ENCODE measurements at regions of chr2 and their contacts with region 1.

Region 1: GRCh38 chr2:112601751-112602150 is 17.3 kb downstream of the CHCHD5 start:
- DNase-seq: peak in 1 of 2 donors; percentile 55
- H3K4me3 ChIP-seq: no peak overlapping the region
- H3K27ac ChIP-seq: no peak overlapping the region
- H3K4me1 ChIP-seq: no peaks in the 10 kb centered on the region
- H3K27me3 ChIP-seq: no peaks in the 10 kb centered on the region
- CTCF ChIP-seq: no peak

Region 2: DNA sequence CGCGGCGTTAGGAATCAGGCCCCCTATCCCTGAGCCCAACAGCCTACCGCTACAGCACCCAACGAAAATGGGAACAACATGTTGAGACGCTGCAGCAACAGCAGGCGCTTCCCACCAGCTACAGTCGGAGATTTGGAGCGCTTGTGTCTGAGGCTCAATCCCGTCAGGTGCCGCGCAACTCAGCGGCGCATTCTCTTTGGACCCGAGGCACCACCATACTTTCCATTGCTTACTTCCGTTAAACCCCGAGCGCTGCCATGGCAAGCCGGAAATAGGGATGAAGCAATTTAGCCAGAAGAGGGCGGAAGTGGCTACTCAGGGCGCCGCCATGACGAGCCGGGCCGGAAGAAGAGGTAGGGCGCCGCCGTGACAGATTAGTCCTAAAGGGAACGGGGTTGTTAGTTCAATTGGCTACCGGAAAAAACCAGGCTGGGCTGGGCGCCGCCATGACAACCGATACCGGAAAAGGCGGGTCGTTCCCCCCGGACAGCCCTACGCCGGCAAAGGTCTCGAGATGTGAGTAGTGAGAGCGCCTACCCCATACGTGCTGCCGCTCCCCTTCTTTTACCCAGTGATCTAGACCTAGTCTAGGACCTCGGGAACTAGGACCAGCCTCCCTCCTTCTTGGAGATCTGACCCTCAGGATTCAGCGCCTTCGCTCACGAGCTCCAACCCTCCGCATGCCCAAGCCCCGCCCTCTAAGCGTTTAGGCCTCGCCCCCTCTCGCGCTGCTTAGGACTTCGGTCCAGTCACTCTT is 17.4 kb before region 1 on chr2 and contains the start of gene CHCHD5:
- intact Hi-C with region 1: no loop called
- DNase-seq: peak; percentile 85 to 98
- H3K4me3 ChIP-seq: peak within 1 kb of the TSS; percentile 69 to 78
- H3K27ac ChIP-seq: peak within 1 kb of the TSS; percentile 92 to 95
- H3K4me1 ChIP-seq: peaks cover 4 to 13% of the 10 kb centered on the region in 2 donors
- H3K27me3 ChIP-seq: no peaks in the 10 kb centered on the region
- CTCF ChIP-seq: peak in 1 of 3 experiments; percentile 28
- total RNA-seq, gene CHCHD5: 26.5 TPM

Region 3: GRCh38 chr2:112626604-112627059 is 24.9 kb after region 1 on chr2:
- intact Hi-C with region 1: loop called (anchors 1 kb)
- DNase-seq: peak in 1 of 2 donors; percentile 78
- H3K4me3 ChIP-seq: peak overlapping the region; percentile 5 to 37
- H3K27ac ChIP-seq: peak overlapping the region; percentile 86 to 88
- H3K4me1 ChIP-seq: peaks cover 0 to 15% of the 10 kb centered on the region in 2 donors
- H3K27me3 ChIP-seq: no peaks in the 10 kb centered on the region
- CTCF ChIP-seq: peak; percentile 68 to 85 (median 72)

Region 4: DNA sequence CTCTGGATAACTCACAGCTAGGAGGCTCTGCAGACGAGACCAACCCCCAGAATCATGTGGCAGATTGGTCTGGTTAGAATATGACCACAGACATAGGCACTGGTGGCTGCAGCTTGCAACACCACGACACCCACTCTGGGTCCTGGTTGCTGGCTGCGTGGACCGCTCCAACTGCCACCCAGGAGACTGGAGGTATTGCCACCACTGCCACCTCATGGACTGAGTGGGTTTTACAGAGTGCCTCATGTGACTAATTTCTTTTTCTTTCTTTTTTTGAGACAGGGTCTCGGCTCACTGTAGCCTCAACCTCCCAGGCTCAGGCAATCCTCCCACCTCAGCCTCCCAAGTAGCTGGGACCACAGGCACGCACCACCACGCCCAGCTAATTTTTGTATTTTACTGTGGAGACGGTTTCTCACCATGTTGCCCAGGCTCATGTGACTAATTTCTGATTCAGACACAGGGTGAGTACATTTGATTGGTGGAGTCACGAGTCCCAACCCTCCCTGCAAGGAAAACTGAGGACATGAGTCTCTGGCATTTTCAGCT is 89.2 kb after region 1 on chr2:
- intact Hi-C with region 1: loop called (anchors 2 kb)
- DNase-seq: peak; percentile 21 to 78
- H3K4me3 ChIP-seq: peak overlapping the region in 1 of 2 donors; percentile 36
- H3K27ac ChIP-seq: no peak overlapping the region
- H3K4me1 ChIP-seq: no peaks in the 10 kb centered on the region
- H3K27me3 ChIP-seq: no peaks in the 10 kb centered on the region
- CTCF ChIP-seq: peak; percentile 58 to 76 (median 74)

Region 5: GRCh38 chr2:112726497-112727190 is 124.9 kb after region 1 on chr2:
- intact Hi-C with region 1: loop called (anchors 1 kb)
- DNase-seq: peak; percentile 61 to 93
- H3K4me3 ChIP-seq: no peak overlapping the region
- H3K27ac ChIP-seq: no peak overlapping the region
- H3K4me1 ChIP-seq: no peaks in the 10 kb centered on the region
- H3K27me3 ChIP-seq: no peaks in the 10 kb centered on the region
- CTCF ChIP-seq: peak; percentile 83 to 87 (median 86)

Region 6: DNA sequence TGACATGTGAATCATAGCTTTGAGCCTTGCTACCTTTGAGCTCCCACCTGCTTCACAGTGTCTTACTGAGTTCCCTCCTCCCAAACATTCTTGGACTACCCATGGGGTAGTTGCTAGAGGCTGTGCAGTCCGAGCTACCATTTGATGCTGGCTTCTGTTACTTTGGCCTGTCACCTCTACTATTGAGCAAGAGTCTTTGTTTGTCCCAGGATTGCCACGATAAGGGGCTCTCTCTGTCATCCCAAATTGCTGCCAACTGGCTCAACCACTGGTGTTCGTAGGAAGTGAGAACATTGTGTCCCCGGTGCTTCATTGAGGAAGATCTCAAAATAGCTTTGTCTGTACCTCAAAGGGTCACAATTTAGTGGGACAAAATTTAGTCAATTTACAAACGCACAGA is 736.1 kb after region 1 on chr2:
- intact Hi-C with region 1: no loop called
- DNase-seq: no peak
- H3K4me3 ChIP-seq: no peak overlapping the region
- H3K27ac ChIP-seq: no peak overlapping the region
- H3K4me1 ChIP-seq: no peaks in the 10 kb centered on the region
- H3K27me3 ChIP-seq: no peaks in the 10 kb centered on the region
- CTCF ChIP-seq: no peak